Activated CD4-positive, alpha-beta T cell treated with anti-CD3 and anti-CD28 coated beads, Interleukin-2, amount 10 ng/mL, durations not matched to agents 24 days and 14 days (primary cell): ENCODE measurements at regions of chr7 and their contacts with region 1.

Region 1: DNA sequence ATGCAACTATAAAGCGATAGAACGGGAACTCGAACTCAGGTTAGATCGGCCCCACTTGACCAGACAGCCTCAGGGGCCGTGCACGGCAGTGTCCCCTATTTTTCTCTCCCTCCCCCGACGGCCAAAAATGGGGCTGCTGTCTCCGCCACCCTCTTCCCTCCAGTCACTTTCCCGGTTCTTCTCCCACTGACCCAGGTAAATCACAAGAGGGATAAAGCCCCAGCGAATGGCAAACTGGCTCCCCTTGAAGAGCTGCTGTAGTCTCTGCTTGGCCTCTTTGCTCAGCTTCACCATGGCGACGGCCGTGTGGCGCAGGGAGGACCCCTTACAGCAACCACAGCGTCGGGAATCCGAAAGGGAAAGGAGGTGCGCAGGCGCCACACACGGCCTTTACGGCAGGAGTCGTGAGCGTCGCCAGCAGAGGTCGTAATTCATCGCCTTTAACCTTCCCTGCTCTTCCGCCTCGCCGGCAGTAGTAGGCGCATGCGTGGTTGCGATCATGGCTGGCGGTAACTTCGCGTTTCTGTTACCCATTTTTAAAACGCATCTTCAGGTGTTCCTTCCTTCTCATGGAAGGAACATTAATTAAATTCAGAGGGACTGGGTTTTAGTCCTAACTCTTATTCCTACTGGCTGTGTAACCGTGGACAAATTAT is at the start of gene TOMM7:
- DNase-seq: peak; percentile 95
- H3K4me3 Mint-ChIP-seq: peak within 1 kb of the TSS; percentile 99
- H3K27ac Mint-ChIP-seq: peak within 1 kb of the TSS; percentile 97
- H3K4me1 Mint-ChIP-seq: peaks cover 32% of the 10 kb centered on the region
- H3K27me3 Mint-ChIP-seq: peaks cover 25% of the 10 kb centered on the region
- total RNA-seq, gene TOMM7: 196 and 201 TPM in 2 replicates

Region 2: DNA sequence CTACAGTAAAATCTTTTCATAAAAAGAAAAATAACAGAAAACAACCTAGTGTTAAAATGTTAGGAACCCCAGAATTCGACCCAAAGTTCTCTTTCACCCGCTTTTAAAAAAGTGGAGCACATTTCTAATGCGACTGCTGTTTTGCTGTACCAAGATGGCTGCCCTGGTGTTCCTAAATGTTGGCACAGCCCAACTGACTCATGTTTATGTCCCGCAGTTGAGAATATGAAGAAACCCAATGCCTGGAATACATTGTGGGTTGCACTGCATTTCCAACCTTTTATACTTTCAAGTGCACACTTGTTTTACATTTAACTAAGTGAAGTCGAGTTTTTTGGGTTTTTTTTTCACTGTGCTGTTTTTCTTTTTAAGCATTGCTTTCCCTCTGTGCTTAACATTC is 323.6 kb before region 1 on chr7:
- intact Hi-C with region 1: no loop called
- DNase-seq: peak; percentile 22
- H3K4me3 Mint-ChIP-seq: no peak overlapping the region
- H3K27ac Mint-ChIP-seq: no peak overlapping the region
- H3K4me1 Mint-ChIP-seq: peaks cover 3% of the 10 kb centered on the region
- H3K27me3 Mint-ChIP-seq: peaks cover 37% of the 10 kb centered on the region

Region 3: DNA sequence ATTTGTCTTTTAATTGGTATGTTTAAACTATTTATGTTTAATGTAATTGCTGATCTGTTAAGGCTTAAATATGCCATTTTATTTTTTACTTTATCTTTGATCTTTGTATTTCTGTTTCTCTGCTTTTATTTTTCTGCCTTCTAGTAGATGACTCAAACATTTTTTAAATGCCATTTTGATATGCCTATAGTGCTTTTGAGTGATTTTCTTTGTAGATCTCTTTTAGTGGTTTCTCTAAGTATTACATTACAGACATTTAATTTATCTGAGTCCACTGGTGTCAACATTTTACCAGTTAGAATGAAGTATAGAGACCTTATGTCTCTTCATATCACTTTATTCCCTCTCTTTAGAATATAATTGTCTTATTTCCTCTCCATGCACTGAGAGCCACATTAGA is 62.9 kb before region 1 on chr7:
- intact Hi-C with region 1: no loop called
- DNase-seq: no peak
- H3K4me3 Mint-ChIP-seq: no peak overlapping the region
- H3K27ac Mint-ChIP-seq: no peak overlapping the region
- H3K4me1 Mint-ChIP-seq: no peaks in the 10 kb centered on the region
- H3K27me3 Mint-ChIP-seq: peaks cover 47% of the 10 kb centered on the region

Region 4: GRCh38 chr7:22854158-22855048 is 31.8 kb after region 1 on chr7:
- intact Hi-C with region 1: loop called (anchors 2 kb)
- DNase-seq: peak; percentile 94
- H3K4me3 Mint-ChIP-seq: peak overlapping the region; percentile 98
- H3K27ac Mint-ChIP-seq: peak overlapping the region; percentile 93
- H3K4me1 Mint-ChIP-seq: peaks cover 28% of the 10 kb centered on the region
- H3K27me3 Mint-ChIP-seq: peaks cover 1% of the 10 kb centered on the region

Region 5: GRCh38 chr7:22872096-22872807 is 49.6 kb after region 1 on chr7:
- intact Hi-C with region 1: no loop called
- DNase-seq: no peak
- H3K4me3 Mint-ChIP-seq: no peak overlapping the region
- H3K27ac Mint-ChIP-seq: no peak overlapping the region
- H3K4me1 Mint-ChIP-seq: peaks cover 4% of the 10 kb centered on the region
- H3K27me3 Mint-ChIP-seq: no peaks in the 10 kb centered on the region